ENCODE measurements at regions of chr6 and their contacts with region 1.

Region 1: GRCh38 chr6:47097092-47097945 is 55.2 kb upstream of the ADGRF1 start:
- DNase-seq: peak; percentile 74
- H3K4me3 ChIP-seq: peak overlapping the region in 1 of 2 experiments; percentile 29; a peak in 1 of 4 replicates
- H3K27ac ChIP-seq: no peak overlapping the region; a peak in 1 of 4 replicates
- H3K4me1 ChIP-seq: peaks cover 0 to 9% of the 10 kb centered on the region in 2 experiments; a peak in 2 of 4 replicates
- H3K27me3 ChIP-seq: no peaks in the 10 kb centered on the region
- CTCF ChIP-seq: peak; percentile 85
- EP300 ChIP-seq: peak in 1 of 2 experiments; percentile 50; a peak in 2 of 4 replicates
- RAD21 ChIP-seq: peak; percentile 98

Region 2: GRCh38 chr6:47034919-47035318 is 62.4 kb before region 1 on chr6:
- CTCF ChIA-PET with region 1: no interaction called
- POLR2A ChIA-PET with region 1: no interaction called
- DNase-seq: peak; percentile 8
- H3K4me3 ChIP-seq: no peak overlapping the region
- H3K27ac ChIP-seq: no peak overlapping the region
- H3K4me1 ChIP-seq: 0 out of 4 replicates have a peak, but pooled peaks cover 0 to 4% of the 10 kb centered on the region in 2 experiments
- H3K27me3 ChIP-seq: peaks cover 42% of the 10 kb centered on the region; the same call in 1 of the 2 replicates
- CTCF ChIP-seq: no peak
- EP300 ChIP-seq: no peak
- RAD21 ChIP-seq: no peak

Region 3: GRCh38 chr6:47083586-47084047 is 13.7 kb before region 1 on chr6:
- CTCF ChIA-PET with region 1: interaction called, 32 read pairs
- POLR2A ChIA-PET with region 1: no interaction called
- DNase-seq: peak; percentile 73
- H3K4me3 ChIP-seq: no peak overlapping the region
- H3K27ac ChIP-seq: peak overlapping the region in 1 of 2 experiments; percentile 77; a peak in 2 of 4 replicates
- H3K4me1 ChIP-seq: peaks cover 0 to 30% of the 10 kb centered on the region in 2 experiments; a peak in 2 of 4 replicates
- H3K27me3 ChIP-seq: peaks cover 5% of the 10 kb centered on the region; the same call in 1 of the 2 replicates
- CTCF ChIP-seq: no peak
- EP300 ChIP-seq: peak; percentile 91 to 100; a peak in 3 of 4 replicates
- RAD21 ChIP-seq: peak; percentile 7; the same call in 1 of the 2 replicates

Region 4: GRCh38 chr6:47111685-47112084 is 14.4 kb after region 1 on chr6:
- CTCF ChIA-PET with region 1: interaction called, 17 read pairs
- POLR2A ChIA-PET with region 1: no interaction called
- DNase-seq: no peak
- H3K4me3 ChIP-seq: no peak overlapping the region
- H3K27ac ChIP-seq: no peak overlapping the region
- H3K4me1 ChIP-seq: no peaks in the 10 kb centered on the region
- H3K27me3 ChIP-seq: no peaks in the 10 kb centered on the region
- CTCF ChIP-seq: no peak
- EP300 ChIP-seq: no peak
- RAD21 ChIP-seq: no peak

Region 5: GRCh38 chr6:47235964-47236760 is 138.8 kb after region 1 on chr6:
- CTCF ChIA-PET with region 1: interaction called, 13 read pairs
- POLR2A ChIA-PET with region 1: no interaction called
- DNase-seq: peak; percentile 75
- H3K4me3 ChIP-seq: no peak overlapping the region
- H3K27ac ChIP-seq: peak overlapping the region in 1 of 2 experiments; percentile 81; a peak in 2 of 4 replicates
- H3K4me1 ChIP-seq: peaks cover 0 to 27% of the 10 kb centered on the region in 2 experiments; a peak in 2 of 4 replicates
- H3K27me3 ChIP-seq: no peaks in the 10 kb centered on the region
- CTCF ChIP-seq: no peak
- EP300 ChIP-seq: peak in 1 of 2 experiments; percentile 72; a peak in 2 of 4 replicates
- RAD21 ChIP-seq: peak; percentile 43

Region 6: GRCh38 chr6:47302043-47302442 is 204.7 kb after region 1 on chr6:
- CTCF ChIA-PET with region 1: interaction called, 231 read pairs
- POLR2A ChIA-PET with region 1: no interaction called
- DNase-seq: no peak
- H3K4me3 ChIP-seq: no peak overlapping the region
- H3K27ac ChIP-seq: no peak overlapping the region
- H3K4me1 ChIP-seq: no peaks in the 10 kb centered on the region; a peak in 1 of 4 replicates
- H3K27me3 ChIP-seq: no peaks in the 10 kb centered on the region
- CTCF ChIP-seq: no peak
- EP300 ChIP-seq: no peak
- RAD21 ChIP-seq: no peak

Region 7: GRCh38 chr6:47309291-47310130 is 212.2 kb after region 1 on chr6 and contains the start of gene TNFRSF21:
- CTCF ChIA-PET with region 1: interaction called, 231 read pairs
- POLR2A ChIA-PET with region 1: no interaction called
- DNase-seq: peak; percentile 93
- H3K4me3 ChIP-seq: peak within 1 kb of the TSS; percentile 76 to 82
- H3K27ac ChIP-seq: peak within 1 kb of the TSS in 1 of 2 experiments; percentile 76; a peak in 1 of 4 replicates
- H3K4me1 ChIP-seq: peaks cover 0 to 6% of the 10 kb centered on the region in 2 experiments; a peak in 2 of 4 replicates
- H3K27me3 ChIP-seq: peaks cover 11% of the 10 kb centered on the region; the same call in 1 of the 2 replicates
- CTCF ChIP-seq: peak; percentile 92
- EP300 ChIP-seq: no peak
- RAD21 ChIP-seq: peak; percentile 98
- polyA plus RNA-seq, gene TNFRSF21: 5.8 and 9.2 TPM in 2 replicates

Measured in SK-N-SH (cell line).